ENCODE measurements at regions of chr10 and their contacts with region 1.

Region 1: GRCh38 chr10:6014241-6014761 is 37.0 kb upstream of the IL15RA start:
- DNase-seq: peak; percentile 75
- CTCF ChIP-seq: peak; percentile 81

Region 2: DNA sequence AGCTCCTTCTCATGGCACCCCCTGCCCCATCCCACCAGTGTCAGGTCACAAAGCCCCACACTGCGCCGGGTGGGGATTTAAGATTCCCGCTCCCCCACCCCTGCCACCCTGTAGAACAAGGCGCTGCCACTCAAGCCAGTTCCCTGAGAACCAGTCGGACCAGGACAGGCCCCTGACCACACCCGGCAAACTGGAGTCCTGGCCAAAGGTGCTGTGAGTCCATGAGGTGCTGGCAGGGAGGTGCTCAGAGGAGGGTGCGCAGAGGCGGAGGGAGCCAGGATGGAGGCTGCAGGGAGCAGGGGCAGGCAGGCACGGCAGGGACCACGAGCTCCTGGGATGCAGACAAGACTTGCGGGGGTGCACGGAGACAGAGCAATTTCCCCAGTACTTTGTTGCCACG is 181.4 kb before region 1 on chr10:
- CTCF ChIA-PET with region 1: no interaction called
- POLR2A ChIA-PET with region 1: no interaction called
- DNase-seq: no peak
- CTCF ChIP-seq: no peak

Region 3: DNA sequence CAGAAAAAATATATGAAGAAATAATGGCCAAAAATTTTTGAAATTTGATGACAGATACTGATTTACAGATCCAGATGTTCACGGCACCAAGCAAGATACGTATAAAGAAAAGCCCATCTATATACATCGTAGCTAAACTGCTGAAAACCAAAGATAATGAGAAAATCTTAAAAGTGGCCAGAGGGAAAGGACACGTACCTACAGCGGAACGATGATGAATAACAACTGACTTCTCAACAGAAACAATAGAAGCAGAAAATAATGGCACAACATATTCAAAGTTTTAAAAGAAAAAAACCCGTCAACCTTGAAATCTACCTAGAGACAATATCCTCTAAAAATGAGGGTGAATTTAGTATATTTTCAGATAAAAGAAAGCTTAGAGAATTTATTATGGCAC is 15.9 kb after region 1 on chr10:
- CTCF ChIA-PET with region 1: interaction called, 11 read pairs
- POLR2A ChIA-PET with region 1: no interaction called
- DNase-seq: no peak
- CTCF ChIP-seq: no peak

Region 4: DNA sequence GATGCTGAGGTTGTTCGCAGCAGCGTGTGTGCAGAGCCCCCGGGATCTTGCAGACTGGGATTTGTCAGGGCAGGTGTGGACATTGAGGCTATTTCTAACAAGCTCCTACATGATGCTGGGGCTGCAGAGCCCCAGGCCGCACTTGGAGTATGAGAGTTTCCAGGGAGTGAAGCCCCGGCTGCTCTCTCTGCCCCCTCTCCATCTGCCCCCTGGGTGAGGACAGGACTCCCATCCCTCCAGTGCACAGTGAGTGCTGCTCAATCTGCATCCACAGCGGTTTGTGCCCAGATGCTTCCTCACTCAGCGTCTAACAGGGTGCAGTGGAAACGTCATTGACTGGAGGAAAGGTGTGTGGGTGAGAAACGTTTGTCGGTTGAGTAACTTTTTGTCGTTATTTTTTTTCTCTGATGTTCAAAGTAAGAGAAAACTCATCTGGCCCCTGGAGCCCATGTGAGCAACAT is 22.6 kb after region 1 on chr10:
- CTCF ChIA-PET with region 1: interaction called, 20 read pairs
- POLR2A ChIA-PET with region 1: no interaction called
- DNase-seq: no peak
- CTCF ChIP-seq: no peak

Region 5: DNA sequence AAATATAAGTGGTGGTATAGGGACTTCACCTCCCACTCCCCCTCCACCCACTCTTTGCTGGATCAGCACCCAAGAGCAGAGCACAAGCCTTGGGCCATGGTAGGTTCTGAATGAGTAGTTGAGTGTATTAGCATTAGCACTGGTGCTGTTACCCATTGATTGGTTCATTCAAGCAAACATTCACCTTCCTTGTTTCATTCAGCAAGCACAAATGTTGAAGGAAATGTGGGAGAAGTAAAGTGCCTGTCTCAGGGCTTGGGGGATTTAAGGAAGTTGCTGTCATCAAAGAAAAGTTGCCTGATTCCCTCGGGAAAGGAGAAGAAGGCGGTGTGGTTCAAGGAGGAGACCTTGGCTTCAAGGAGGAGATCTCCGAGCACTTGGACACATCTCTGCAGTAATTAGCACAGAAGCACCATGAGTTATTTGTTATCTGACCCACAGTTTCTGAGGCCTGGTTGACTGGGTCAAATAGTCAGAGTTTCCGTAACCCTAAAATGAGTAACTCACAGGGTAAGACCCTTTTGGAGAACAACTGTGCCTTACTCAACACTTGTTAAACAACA is 30.5 kb after region 1 on chr10:
- CTCF ChIA-PET with region 1: interaction called, 49 read pairs
- POLR2A ChIA-PET with region 1: no interaction called
- DNase-seq: peak; percentile 54
- CTCF ChIP-seq: no peak

Region 6: GRCh38 chr10:6050801-6051445 is 36.6 kb after region 1 on chr10:
- CTCF ChIA-PET with region 1: interaction called, 49 read pairs
- POLR2A ChIA-PET with region 1: no interaction called
- DNase-seq: peak; percentile 82
- CTCF ChIP-seq: peak; percentile 30

Region 7: DNA sequence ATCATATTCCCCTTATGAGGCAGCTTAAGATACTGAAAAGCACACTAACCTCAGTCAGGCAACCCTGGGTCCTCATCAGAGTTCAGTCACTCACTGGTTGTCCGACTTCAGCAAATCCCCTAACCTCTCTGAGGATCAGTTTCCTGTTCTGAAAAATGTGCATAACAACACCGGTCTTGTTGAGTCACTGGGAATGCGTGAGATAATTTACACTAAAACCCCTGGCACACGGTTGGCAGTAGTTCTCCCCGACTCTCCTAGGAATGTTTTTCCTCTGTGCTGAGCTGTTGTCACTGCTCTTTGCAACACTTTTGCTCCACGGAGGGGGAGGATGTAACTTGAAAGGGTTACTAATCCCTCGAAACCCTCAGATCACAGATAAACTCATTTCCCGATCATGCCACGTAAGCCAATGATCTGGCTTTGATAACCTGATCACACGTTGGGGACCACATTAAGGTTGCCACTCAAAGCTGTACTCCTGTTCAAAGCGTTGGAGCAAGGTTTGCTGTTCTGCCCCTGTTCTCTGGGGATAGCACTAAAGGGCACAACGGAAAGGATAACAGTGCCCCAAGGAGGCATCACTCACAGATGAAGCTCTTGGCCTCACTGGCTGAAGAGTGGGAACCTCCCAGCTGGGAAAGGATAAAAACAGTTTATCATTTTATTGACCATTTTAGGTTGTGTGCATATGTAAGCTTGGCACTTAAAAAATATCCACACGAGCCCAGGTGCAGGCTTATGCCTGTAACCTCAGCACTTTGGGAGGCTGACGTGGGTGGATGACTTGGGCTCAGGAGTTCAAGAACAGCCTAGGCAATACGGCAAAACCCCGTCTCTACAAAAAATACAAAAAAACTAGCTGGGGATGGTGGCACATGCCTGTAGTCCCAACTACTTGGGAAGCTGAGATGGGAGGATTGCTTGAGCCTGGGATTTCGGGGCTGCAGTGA is 69.5 kb after region 1 on chr10:
- CTCF ChIA-PET with region 1: interaction called, 32 read pairs
- POLR2A ChIA-PET with region 1: no interaction called
- DNase-seq: no peak
- CTCF ChIP-seq: no peak